Endothelial cell of umbilical vein (primary cell): ENCODE measurements at regions of chr14 and their contacts with region 1.

Region 1: DNA sequence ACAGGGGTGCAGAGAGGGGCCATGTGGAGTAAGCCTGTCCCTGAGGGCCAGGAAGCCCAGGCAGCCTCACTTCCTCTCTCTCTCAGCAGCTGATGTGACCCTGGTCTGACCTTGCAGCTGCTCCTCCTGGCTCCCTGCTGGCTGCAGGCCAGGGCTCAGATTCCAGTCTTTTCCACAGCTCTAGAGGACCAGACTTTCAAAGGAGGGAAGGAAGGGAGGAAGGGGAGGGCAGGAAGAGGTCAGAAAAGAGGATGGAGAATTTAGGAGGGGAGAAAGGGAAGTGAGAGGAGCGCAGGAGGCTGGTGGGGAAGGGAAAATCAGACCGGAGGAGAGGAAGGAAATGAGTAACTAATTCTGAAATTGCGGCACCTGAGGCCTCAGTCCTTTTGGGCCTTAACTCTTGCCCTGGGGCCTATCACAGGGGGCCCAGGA is 40.9 kb upstream of the VASH1 start:
- DNase-seq: peak; percentile 91
- H3K4me3 ChIP-seq: no peak overlapping the region
- H3K27ac ChIP-seq: peak overlapping the region; percentile 26
- H3K4me1 ChIP-seq: peaks cover 35% of the 10 kb centered on the region
- H3K27me3 ChIP-seq: no peaks in the 10 kb centered on the region
- CTCF ChIP-seq: no peak
- POLR2A ChIP-seq: no peak

Region 2: GRCh38 chr14:76473481-76474263 is 246.7 kb before region 1 on chr14:
- CTCF ChIA-PET with region 1: no interaction called
- POLR2A ChIA-PET with region 1: no interaction called
- dilution Hi-C with region 1: no loop called
- intact Hi-C with region 1: no loop called
- DNase-seq: no peak
- H3K4me3 ChIP-seq: no peak overlapping the region
- H3K27ac ChIP-seq: no peak overlapping the region
- H3K4me1 ChIP-seq: no peaks in the 10 kb centered on the region
- H3K27me3 ChIP-seq: peaks cover 2 to 7% of the 10 kb centered on the region in 2 experiments
- CTCF ChIP-seq: peak in 1 of 2 donors; percentile 22
- POLR2A ChIP-seq: no peak

Region 3: DNA sequence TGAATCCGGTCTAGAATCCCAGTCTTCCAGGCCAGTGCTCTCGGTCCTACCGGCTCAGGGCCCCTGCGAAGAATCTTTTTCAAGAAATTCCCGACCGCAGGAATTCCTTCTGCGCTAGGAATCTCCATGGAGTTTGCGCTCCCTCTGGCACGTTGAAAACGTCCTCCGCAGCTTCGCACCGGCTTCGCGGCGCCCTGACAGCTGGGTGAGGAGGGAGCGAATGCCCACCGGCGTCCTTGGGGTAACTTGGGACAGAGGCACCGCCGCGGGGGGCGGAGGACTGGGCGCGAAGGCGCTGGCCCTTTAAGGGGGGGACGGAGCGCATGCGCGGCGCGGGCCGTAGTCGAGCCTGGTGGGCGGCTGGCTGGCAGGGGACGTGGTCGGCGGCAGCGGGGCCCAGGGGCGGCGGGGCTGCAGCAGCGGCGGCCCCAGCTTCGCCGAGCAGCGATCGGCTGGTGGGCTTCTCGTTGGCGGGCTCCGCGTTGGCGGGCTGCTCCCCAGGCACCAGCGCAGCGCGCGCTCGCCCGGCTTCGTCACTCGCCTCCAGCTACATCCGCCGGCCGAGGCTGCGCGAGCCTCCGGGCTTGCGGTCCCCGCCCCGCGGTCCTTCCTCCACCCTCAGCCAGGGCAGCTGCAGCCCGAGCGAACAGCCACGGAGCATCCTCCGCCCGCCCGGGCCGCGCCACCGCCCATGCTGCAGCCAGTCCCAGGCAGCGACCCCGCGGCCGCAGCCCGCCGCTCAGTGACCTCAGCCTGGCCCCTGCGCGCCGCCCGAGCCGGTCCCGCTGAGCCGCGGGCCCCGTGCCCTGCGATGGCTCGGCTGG is 41.0 kb after region 1 on chr14 and contains the start of gene VASH1:
- CTCF ChIA-PET with region 1: interaction called, 5 read pairs
- POLR2A ChIA-PET with region 1: no interaction called
- dilution Hi-C with region 1: no loop called
- intact Hi-C with region 1: loop called (anchors 1 kb)
- DNase-seq: peak; percentile 75
- H3K4me3 ChIP-seq: peak within 1 kb of the TSS; percentile 81 to 98 (median 90)
- H3K27ac ChIP-seq: peak within 1 kb of the TSS; percentile 8
- H3K4me1 ChIP-seq: peaks cover 30% of the 10 kb centered on the region
- H3K27me3 ChIP-seq: peaks cover 2 to 6% of the 10 kb centered on the region in 2 experiments
- CTCF ChIP-seq: no peak
- POLR2A ChIP-seq: peak; percentile 82
- total RNA-seq, gene VASH1: 168 and 246 TPM in 2 replicates

Region 4: DNA sequence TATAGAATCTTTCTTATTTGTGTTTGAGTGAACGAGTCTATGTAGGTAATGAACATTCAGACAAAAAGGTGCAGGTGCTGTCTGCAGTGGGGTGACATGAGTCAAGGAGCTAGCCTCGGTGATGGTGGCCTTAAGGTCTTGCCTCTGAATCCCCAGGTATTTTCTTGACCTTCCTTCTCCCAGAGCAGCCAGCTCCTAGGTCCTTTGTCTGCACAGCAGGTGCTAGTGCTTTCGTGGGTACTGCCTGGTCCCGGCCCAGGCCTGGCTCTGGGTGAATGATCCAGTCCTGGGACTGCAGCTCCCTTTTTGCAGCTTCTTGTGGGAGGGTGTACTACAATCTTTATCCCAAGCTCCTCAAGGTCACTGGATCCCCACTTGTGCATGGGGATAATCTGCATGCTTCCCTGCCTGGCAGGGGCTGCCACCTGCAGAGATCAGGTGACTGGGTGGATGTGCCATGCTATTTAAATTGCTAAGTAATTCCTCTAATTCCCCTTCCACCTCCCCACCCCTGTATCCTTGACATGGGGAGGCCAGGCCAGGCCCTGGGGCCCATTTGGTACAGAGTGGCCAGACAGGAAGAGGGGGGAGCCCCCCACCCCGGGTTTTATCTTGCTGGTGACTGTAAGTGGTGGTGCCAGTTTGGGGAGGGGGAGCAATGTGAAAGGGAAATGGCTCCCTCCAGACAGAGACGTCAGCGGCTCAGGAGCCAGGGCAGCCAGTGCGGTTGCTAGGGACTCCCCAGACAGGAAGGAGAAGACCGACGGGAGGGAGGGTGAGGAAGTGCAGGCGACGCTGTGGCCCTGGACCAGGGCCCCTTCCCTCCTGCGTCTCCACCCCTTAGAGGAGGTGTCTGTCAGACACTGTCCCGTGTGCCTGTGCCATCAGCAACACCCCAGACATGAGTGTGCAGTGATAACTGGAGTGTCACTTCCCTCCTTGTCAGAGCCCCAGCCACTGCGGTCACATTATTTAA is 47.6 kb after region 1 on chr14:
- CTCF ChIA-PET with region 1: interaction called, 4 read pairs
- POLR2A ChIA-PET with region 1: interaction called, 3 read pairs
- dilution Hi-C with region 1: no loop called
- intact Hi-C with region 1: loop called (anchors 1 kb)
- DNase-seq: peak; percentile 69
- H3K4me3 ChIP-seq: no peak overlapping the region
- H3K27ac ChIP-seq: peak overlapping the region; percentile 54
- H3K4me1 ChIP-seq: peaks cover 42% of the 10 kb centered on the region
- H3K27me3 ChIP-seq: no peaks in the 10 kb centered on the region
- CTCF ChIP-seq: no peak
- POLR2A ChIP-seq: peak; percentile 22

Region 5: DNA sequence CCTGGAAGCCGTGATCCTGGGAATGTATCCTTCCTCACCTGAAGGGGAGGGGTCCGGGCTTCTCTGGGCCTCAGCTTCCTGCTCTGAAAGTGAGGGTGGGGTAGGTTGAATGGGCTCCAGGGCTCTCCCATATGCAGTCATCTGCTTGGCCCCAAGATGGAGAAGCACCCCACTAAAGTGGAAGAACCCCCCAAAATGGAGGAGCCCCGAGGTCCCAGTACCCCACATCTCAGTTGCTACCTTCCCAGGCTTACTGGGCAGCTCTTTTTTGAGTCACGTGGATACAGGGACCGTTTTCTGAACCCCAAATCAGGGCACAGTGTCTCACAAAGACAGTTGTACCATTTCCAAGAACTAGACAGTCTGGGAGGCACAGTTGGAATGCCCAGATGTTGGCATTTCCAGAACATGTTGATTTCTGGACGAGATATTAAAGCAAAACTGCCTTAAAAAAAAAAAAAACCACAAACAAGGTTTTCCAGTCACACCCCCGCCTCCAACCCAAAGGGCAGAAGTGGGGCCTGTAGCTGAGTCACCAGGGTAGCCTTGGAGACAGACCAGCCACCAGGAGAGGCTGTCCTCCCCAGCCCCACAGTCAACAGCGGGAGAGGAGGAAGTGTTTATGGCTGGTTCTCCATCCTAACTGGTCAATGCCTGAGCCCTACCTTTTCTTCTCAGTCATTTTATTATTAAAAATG is 52.9 kb after region 1 on chr14:
- CTCF ChIA-PET with region 1: interaction called, 557 read pairs
- POLR2A ChIA-PET with region 1: interaction called, 3 read pairs
- dilution Hi-C with region 1: no loop called
- intact Hi-C with region 1: loop called (anchors 1 kb)
- DNase-seq: peak; percentile 89
- H3K4me3 ChIP-seq: no peak overlapping the region
- H3K27ac ChIP-seq: peak overlapping the region; percentile 92
- H3K4me1 ChIP-seq: peaks cover 27% of the 10 kb centered on the region
- H3K27me3 ChIP-seq: no peaks in the 10 kb centered on the region
- CTCF ChIP-seq: no peak
- POLR2A ChIP-seq: no peak

Region 6: GRCh38 chr14:76812211-76813044 is 92.0 kb after region 1 on chr14 and contains the start of gene ANGEL1:
- CTCF ChIA-PET with region 1: interaction called, 19 read pairs
- POLR2A ChIA-PET with region 1: no interaction called
- dilution Hi-C with region 1: no loop called
- intact Hi-C with region 1: no loop called
- DNase-seq: peak; percentile 90
- H3K4me3 ChIP-seq: peak within 1 kb of the TSS; percentile 72 to 85 (median 75)
- H3K27ac ChIP-seq: peak within 1 kb of the TSS; percentile 34
- H3K4me1 ChIP-seq: peaks cover 14% of the 10 kb centered on the region
- H3K27me3 ChIP-seq: peaks cover 7 to 8% of the 10 kb centered on the region in 2 experiments
- CTCF ChIP-seq: no peak
- POLR2A ChIP-seq: peak; percentile 87
- total RNA-seq, gene ANGEL1: 14.8 and 18.4 TPM in 2 replicates

Region 7: GRCh38 chr14:76947078-76947837 is 226.9 kb after region 1 on chr14:
- CTCF ChIA-PET with region 1: no interaction called
- POLR2A ChIA-PET with region 1: no interaction called
- dilution Hi-C with region 1: no loop called
- intact Hi-C with region 1: no loop called
- DNase-seq: peak; percentile 83
- H3K4me3 ChIP-seq: no peak overlapping the region
- H3K27ac ChIP-seq: peak overlapping the region; percentile 72
- H3K4me1 ChIP-seq: peaks cover 40% of the 10 kb centered on the region
- H3K27me3 ChIP-seq: no peaks in the 10 kb centered on the region
- CTCF ChIP-seq: peak; percentile 28 to 54
- POLR2A ChIP-seq: no peak